A673 (cell line): ENCODE measurements at regions of chr7 and their contacts with region 1.

Region 1: GRCh38 chr7:142632291-142633134 is 116.8 kb upstream of the PRSS1 start:
- DNase-seq: peak; percentile 71
- H3K4me3 ChIP-seq: no peak overlapping the region
- H3K27ac ChIP-seq: no peak overlapping the region
- H3K4me1 ChIP-seq: no peaks in the 10 kb centered on the region
- H3K27me3 ChIP-seq: peaks cover 45% of the 10 kb centered on the region
- CTCF ChIP-seq: peak; percentile 72

Region 2: GRCh38 chr7:142811154-142811737 is 178.7 kb after region 1 on chr7:
- CTCF ChIA-PET with region 1: interaction called, 4 read pairs
- POLR2A ChIA-PET with region 1: no interaction called
- intact Hi-C with region 1: loop called (anchors 1 kb)
- DNase-seq: peak; percentile 61
- H3K4me3 ChIP-seq: no peak overlapping the region
- H3K27ac ChIP-seq: no peak overlapping the region
- H3K4me1 ChIP-seq: no peaks in the 10 kb centered on the region
- H3K27me3 ChIP-seq: peaks cover 43% of the 10 kb centered on the region
- CTCF ChIP-seq: peak; percentile 67